ENCODE measurements at regions of chr10 and their contacts with region 1.

Region 1: DNA sequence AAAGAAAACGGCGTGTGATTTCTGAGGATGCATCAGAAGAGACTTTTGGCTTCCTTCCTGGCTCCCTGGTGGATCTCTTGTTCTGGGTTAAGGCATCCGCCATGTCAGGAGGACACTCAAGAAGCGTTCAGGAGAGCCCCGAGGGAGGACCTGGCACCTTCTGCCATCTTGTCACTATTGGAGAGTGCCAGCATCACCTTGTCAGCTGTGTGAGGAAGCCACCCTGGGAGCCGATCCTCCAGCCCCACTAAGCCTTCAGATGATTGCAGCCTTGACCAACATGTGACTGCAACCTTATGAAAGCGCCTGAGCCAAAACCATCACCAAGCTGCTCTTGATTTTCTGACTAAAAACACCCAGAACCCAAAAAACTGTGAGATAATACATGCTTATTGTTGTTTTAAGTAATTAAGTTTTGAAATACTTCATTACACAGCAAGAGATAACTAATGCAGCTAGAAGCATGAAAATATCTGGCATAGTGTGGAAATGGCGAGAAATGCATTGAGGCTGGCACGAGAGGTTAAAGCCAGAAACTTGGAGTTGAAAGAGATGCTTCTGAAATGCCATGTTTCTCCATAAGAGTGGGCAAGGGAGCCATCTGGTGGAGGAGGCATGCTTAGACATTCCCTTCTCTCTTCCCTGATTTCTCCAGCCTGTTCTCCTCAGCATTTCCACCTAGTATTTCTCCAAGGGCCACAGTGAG is 5.4 kb upstream of the ZFYVE27 start:
- DNase-seq: peak in 1 of 2 donors; percentile 48
- ATAC-seq: peak; percentile 54 to 84
- H3K4me3 ChIP-seq: no peak overlapping the region
- H3K27ac ChIP-seq: no peak overlapping the region
- H3K4me1 ChIP-seq: peaks cover 0 to 1% of the 10 kb centered on the region in 2 donors
- H3K27me3 ChIP-seq: no peaks in the 10 kb centered on the region
- CTCF ChIP-seq: peak; percentile 63 to 88 (median 84)
- POLR2A ChIP-seq: no peak

Region 2: GRCh38 chr10:97572214-97572989 is 159.1 kb before region 1 on chr10 and contains the start of gene ANKRD2:
- in situ Hi-C with region 1: no loop called
- intact Hi-C with region 1: no loop called
- DNase-seq: peak; percentile 77 to 89
- ATAC-seq: peak; percentile 61 to 71
- H3K4me3 ChIP-seq: peak within 1 kb of the TSS; percentile 28 to 58 (median 35)
- H3K27ac ChIP-seq: peak within 1 kb of the TSS; percentile 90 to 92 (median 91)
- H3K4me1 ChIP-seq: peaks cover 61 to 65% of the 10 kb centered on the region in 2 donors
- H3K27me3 ChIP-seq: no peaks in the 10 kb centered on the region
- CTCF ChIP-seq: peak; percentile 89 to 96 (median 93)
- POLR2A ChIP-seq: no peak
- total RNA-seq, gene ANKRD2: 105 to 1,024 (median 853) TPM

Region 3: GRCh38 chr10:97701438-97702069 is 29.9 kb before region 1 on chr10:
- in situ Hi-C with region 1: no loop called
- intact Hi-C with region 1: loop called (anchors 1 kb)
- DNase-seq: peak in 1 of 2 donors; percentile 29
- ATAC-seq: peak; percentile 81 to 97
- H3K4me3 ChIP-seq: no peak overlapping the region
- H3K27ac ChIP-seq: no peak overlapping the region
- H3K4me1 ChIP-seq: no peaks in the 10 kb centered on the region
- H3K27me3 ChIP-seq: no peaks in the 10 kb centered on the region
- CTCF ChIP-seq: peak; percentile 41 to 81 (median 71)
- POLR2A ChIP-seq: no peak

Region 4: GRCh38 chr10:97714048-97714371 is 17.5 kb before region 1 on chr10:
- in situ Hi-C with region 1: no loop called
- intact Hi-C with region 1: loop called (anchors 1 kb)
- DNase-seq: peak; percentile 46 to 62
- ATAC-seq: peak; percentile 74 to 79
- H3K4me3 ChIP-seq: peak overlapping the region; percentile 57 to 91 (median 68)
- H3K27ac ChIP-seq: peak overlapping the region; percentile 63 to 85 (median 78)
- H3K4me1 ChIP-seq: peaks cover 13 to 19% of the 10 kb centered on the region in 2 donors
- H3K27me3 ChIP-seq: peaks cover 6 to 13% (median 7%) of the 10 kb centered on the region in 3 donors
- CTCF ChIP-seq: peak in 2 of 5 experiments; percentile 9 to 30
- POLR2A ChIP-seq: peak in 1 of 2 donors; percentile 14

Region 5: DNA sequence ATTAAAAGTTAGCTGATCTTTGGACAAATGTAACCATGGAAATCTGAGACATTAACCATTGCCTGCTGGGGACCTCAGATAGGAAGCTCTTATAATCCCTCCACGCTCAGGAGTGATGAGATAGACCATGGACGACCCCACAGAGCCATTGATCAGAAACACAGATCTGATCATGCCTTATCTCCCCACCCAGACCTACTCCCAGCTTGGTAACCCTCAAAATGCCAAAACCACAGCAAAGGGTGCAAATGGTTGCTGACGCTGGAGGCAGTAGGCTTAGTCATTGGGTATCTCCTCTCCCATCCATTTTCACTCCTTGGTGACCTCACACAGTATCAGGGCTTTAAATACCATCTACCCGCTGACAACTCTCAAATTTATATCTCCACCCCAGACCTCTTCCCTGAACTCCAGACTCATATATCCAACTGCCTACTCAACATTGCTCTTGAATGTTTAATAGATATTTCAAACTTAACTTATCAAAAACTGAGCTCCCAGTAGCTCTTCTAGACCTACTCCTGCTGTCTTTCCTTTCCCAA is 238.1 kb after region 1 on chr10:
- in situ Hi-C with region 1: no loop called
- intact Hi-C with region 1: no loop called
- DNase-seq: no peak
- ATAC-seq: no peak
- H3K4me3 ChIP-seq: no peak overlapping the region
- H3K27ac ChIP-seq: no peak overlapping the region
- H3K4me1 ChIP-seq: no peaks in the 10 kb centered on the region
- H3K27me3 ChIP-seq: peaks cover 15 to 33% (median 22%) of the 10 kb centered on the region in 3 donors
- CTCF ChIP-seq: no peak
- POLR2A ChIP-seq: no peak

Measured in gastrocnemius medialis (tissue), 4 donors.